Adrenal gland (tissue), 19 donors: ENCODE measurements at regions of chr19 and their contacts with region 1.

Region 1: GRCh38 chr19:38095411-38096308 is 128.4 kb downstream of the DPF1 start:
- DNase-seq: peak; percentile 65 to 92 (median 77)
- H3K4me3 ChIP-seq: no peak overlapping the region
- H3K27ac ChIP-seq: no peak overlapping the region
- H3K4me1 ChIP-seq: no peaks in the 10 kb centered on the region
- H3K27me3 ChIP-seq: no peaks in the 10 kb centered on the region
- CTCF ChIP-seq: peak; percentile 45 to 73 (median 66)
- POLR2A ChIP-seq: no peak

Region 2: DNA sequence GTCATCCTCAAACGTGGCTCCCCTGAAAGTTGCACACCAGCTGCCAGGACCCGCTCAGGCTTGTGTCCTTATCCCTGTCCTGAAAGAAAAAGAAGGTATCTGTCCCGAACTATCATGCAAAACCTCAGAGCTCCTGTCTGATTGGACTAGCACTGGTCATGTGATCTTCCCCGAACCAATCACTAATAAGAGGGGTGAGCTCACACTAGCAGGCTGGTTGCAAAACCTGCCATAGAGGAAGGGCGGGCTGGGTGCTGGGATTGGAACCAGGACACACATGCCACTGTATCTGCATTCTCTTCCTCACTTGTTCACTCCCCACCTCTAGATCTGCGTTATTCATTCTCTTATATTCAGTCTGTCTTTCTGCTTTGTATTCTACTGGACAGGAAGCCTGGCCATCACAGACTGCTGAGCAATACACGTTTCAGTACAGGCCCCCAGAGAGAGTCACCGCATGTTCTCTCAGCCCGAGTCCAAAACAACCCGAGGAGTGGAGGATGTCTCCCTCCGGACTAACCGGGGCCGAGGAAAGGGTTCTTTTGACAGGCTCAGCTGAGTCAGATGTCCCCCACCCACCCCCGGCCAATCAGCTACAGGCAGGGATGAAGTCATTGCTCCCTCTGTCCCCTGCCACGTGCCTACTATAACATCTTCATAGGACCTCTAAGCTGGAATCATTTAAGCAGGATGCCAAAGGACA is 91.0 kb before region 1 on chr19:
- intact Hi-C with region 1: loop called in 1 of 2 experiments (anchors 10 kb)
- DNase-seq: peak; percentile 72 to 95 (median 84)
- H3K4me3 ChIP-seq: peak overlapping the region in 2 of 4 donors; percentile 14 to 15
- H3K27ac ChIP-seq: peak overlapping the region in 4 of 5 donors; percentile 28 to 82 (median 57)
- H3K4me1 ChIP-seq: peaks cover 15 to 19% of the 10 kb centered on the region in 2 donors
- H3K27me3 ChIP-seq: no peaks in the 10 kb centered on the region
- CTCF ChIP-seq: no peak
- POLR2A ChIP-seq: peak in 1 of 2 donors; percentile 60